GM12878 (cell line): ENCODE measurements at regions of chr1 and their contacts with region 1.

Region 1: DNA sequence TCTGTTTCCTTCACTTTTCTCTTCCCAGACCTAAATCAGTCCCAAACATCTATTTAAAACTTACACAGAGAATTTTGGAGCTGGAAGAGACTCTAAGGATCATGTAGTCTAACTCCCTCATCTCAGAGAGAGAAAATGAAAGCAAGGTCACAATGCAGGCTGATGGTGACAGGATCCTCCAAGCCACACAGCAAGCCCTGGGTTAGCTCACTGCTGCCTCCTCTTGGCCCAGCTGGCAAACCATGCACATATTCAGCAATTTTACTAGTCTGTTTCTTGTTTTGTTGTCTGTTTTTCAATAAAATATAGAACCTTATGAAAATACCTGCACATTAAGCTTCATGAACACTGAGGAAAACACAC is 27.7 kb upstream of the LY9 start:
- DNase-seq: peak; percentile 84
- ATAC-seq: peak; percentile 94
- H3K4me3 ChIP-seq: peak overlapping the region; percentile 59
- H3K27ac ChIP-seq: peak overlapping the region; percentile 89
- H3K4me1 ChIP-seq: peaks cover 23% of the 10 kb centered on the region
- H3K27me3 ChIP-seq: no peaks in the 10 kb centered on the region
- CTCF ChIP-seq: peak; percentile 90 to 97 (median 91)
- EP300 ChIP-seq: no peak
- POLR2A ChIP-seq: no peak; the same call in 1 of the 2 replicates
- RAD21 ChIP-seq: peak; percentile 96

Region 2: DNA sequence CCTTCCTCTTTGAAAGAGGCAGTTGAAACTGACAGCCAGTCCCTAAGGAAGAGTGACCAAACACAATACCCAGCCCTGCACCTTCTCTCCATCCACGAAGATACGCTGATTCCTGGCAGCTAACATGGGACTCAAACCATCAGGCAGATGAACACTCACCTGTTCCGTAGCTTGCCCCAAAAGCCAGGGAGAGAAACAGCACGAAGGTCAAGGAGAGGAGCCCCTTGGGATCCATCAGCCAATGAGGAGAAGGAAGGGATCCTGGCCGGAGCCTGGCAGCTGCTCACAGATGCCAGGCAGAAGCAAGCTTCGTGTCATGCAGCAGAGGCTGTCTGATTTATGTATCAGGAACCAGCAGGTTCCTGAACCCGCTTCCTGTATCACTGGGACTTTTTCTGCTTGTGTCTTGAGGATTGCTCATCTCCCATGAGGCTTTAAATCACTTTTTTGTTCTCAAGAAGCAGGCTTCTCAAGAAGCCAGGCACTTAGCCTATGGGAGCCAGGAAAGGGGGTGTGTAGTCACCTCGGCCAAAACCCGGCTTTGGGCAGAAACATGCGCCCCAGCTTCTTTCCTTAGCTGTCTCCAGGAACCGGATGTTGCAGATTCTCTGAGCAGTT is 121.5 kb before region 1 on chr1 and contains the start of gene SLAMF1:
- CTCF ChIA-PET with region 1: interaction called, 4 read pairs
- POLR2A ChIA-PET with region 1: no interaction called
- RAD21 ChIA-PET with region 1: interaction called, 14 read pairs
- SMC1A ChIA-PET with region 1: interaction called, 3 read pairs
- in situ Hi-C with region 1: no loop called
- intact Hi-C with region 1: no loop called
- DNase-seq: peak; percentile 95
- ATAC-seq: peak; percentile 63
- H3K4me3 ChIP-seq: peak within 1 kb of the TSS; percentile 95
- H3K27ac ChIP-seq: peak within 1 kb of the TSS; percentile 95
- H3K4me1 ChIP-seq: peaks cover 19% of the 10 kb centered on the region
- H3K27me3 ChIP-seq: no peaks in the 10 kb centered on the region
- CTCF ChIP-seq: no peak
- EP300 ChIP-seq: peak; percentile 5 to 19; a peak in 1 of 4 replicates
- POLR2A ChIP-seq: peak; percentile 82
- RAD21 ChIP-seq: no peak
- polyA plus RNA-seq, gene SLAMF1: 128 to 145 TPM

Region 3: GRCh38 chr1:160711602-160712311 is 56.5 kb before region 1 on chr1 and contains the start of gene CD48:
- CTCF ChIA-PET with region 1: interaction called, 15 read pairs
- POLR2A ChIA-PET with region 1: interaction called, 14 read pairs
- RAD21 ChIA-PET with region 1: interaction called, 52 read pairs
- SMC1A ChIA-PET with region 1: interaction called, 69 read pairs
- in situ Hi-C with region 1: no loop called
- intact Hi-C with region 1: no loop called
- DNase-seq: no peak
- ATAC-seq: peak; percentile 56
- H3K4me3 ChIP-seq: peak within 1 kb of the TSS; percentile 93
- H3K27ac ChIP-seq: peak within 1 kb of the TSS; percentile 100
- H3K4me1 ChIP-seq: peaks cover 18% of the 10 kb centered on the region
- H3K27me3 ChIP-seq: no peaks in the 10 kb centered on the region
- CTCF ChIP-seq: no peak
- EP300 ChIP-seq: no peak; a peak in 2 of 4 replicates
- POLR2A ChIP-seq: peak; percentile 81
- RAD21 ChIP-seq: no peak
- polyA plus RNA-seq, gene CD48: 667 to 776 TPM

Region 4: DNA sequence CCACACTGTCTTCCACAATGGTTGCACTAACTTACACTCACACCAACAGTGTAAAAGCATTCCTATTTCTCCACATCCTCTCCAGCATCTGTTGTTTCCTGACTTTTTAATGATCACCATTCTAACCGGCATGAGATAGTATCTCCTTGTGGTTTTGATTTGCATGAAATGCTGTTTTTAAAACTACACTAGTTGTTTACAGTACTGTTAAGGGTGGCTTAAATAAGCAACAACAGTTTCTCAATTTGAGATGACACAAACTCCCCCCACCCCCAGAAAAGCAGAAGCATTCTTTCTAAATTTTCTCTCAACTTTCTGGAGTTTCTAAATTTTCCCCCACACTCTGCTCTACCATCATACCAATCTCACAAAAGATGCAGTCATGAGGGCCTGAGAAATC is 36.3 kb before region 1 on chr1:
- CTCF ChIA-PET with region 1: interaction called, 209 read pairs
- POLR2A ChIA-PET with region 1: interaction called, 54 read pairs
- RAD21 ChIA-PET with region 1: interaction called, 137 read pairs
- SMC1A ChIA-PET with region 1: interaction called, 301 read pairs
- in situ Hi-C with region 1: loop called (anchors 5 kb)
- intact Hi-C with region 1: loop called (anchors 1 kb)
- DNase-seq: no peak
- ATAC-seq: peak; percentile 63
- H3K4me3 ChIP-seq: peak overlapping the region; percentile 4; the same call in 1 of the 2 replicates
- H3K27ac ChIP-seq: peak overlapping the region; percentile 74
- H3K4me1 ChIP-seq: peaks cover 40% of the 10 kb centered on the region
- H3K27me3 ChIP-seq: no peaks in the 10 kb centered on the region
- CTCF ChIP-seq: no peak
- EP300 ChIP-seq: no peak
- POLR2A ChIP-seq: no peak
- RAD21 ChIP-seq: no peak

Region 5: DNA sequence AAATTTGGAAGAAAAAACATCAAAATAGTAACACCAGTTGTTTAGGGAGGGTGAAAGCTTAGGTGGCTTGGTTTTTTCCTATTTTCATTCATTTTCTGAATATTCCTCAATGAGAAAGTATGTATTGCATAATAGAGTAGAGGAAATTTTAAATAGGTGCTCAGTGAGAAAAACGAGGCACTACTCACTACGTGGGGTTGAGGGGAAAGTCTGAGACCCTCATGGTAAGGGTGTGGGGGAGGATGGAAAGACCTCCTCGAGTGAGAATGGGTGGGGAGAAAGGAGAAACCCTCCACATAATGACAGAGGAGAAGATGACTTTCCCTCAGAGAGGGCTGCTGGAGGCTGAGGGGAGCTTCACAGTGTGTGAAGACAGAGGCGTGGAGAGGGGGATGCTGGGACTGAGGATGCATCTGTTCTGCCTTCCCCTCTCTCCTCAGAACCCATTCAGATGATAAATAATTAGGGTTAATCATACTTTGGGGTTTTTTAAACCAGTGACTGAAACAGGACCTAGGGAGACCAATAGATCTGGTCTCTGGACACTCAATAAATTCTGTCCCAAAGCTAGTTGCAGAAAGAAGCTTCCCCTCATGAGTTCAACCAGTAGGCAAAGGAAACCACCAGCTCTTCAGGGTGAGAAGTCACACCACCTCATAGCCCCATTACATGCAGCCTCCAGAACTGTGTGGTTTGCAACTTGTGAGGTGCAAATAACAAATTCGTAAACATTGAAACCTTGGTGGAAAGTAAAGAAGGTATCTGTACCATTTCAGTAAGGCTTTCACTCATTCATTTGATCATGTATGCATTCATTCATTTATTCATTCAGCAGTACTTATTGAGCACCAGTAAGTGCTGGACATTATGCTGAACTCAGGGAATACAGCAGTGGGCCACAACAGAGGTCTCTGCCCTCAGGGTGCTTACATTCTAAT is 12.1 kb before region 1 on chr1:
- CTCF ChIA-PET with region 1: interaction called, 42 read pairs
- POLR2A ChIA-PET with region 1: interaction called, 32 read pairs
- RAD21 ChIA-PET with region 1: interaction called, 33 read pairs
- SMC1A ChIA-PET with region 1: interaction called, 109 read pairs
- in situ Hi-C with region 1: no loop called
- intact Hi-C with region 1: no loop called
- DNase-seq: no peak
- ATAC-seq: peak; percentile 77
- H3K4me3 ChIP-seq: no peak overlapping the region
- H3K27ac ChIP-seq: peak overlapping the region; percentile 49
- H3K4me1 ChIP-seq: peaks cover 20% of the 10 kb centered on the region
- H3K27me3 ChIP-seq: no peaks in the 10 kb centered on the region
- CTCF ChIP-seq: no peak
- EP300 ChIP-seq: peak; percentile 32 to 43; a peak in 1 of 4 replicates
- POLR2A ChIP-seq: peak; percentile 44; the same call in 1 of the 2 replicates
- RAD21 ChIP-seq: no peak

Region 6: GRCh38 chr1:160830321-160831153 is 62.3 kb after region 1 on chr1:
- CTCF ChIA-PET with region 1: interaction called, 39 read pairs
- POLR2A ChIA-PET with region 1: no interaction called
- RAD21 ChIA-PET with region 1: interaction called, 7 read pairs
- SMC1A ChIA-PET with region 1: interaction called, 123 read pairs
- in situ Hi-C with region 1: no loop called
- intact Hi-C with region 1: no loop called
- DNase-seq: no peak
- ATAC-seq: peak; percentile 98
- H3K4me3 ChIP-seq: no peak overlapping the region
- H3K27ac ChIP-seq: no peak overlapping the region
- H3K4me1 ChIP-seq: no peaks in the 10 kb centered on the region
- H3K27me3 ChIP-seq: no peaks in the 10 kb centered on the region
- CTCF ChIP-seq: peak; percentile 67 to 87 (median 76)
- EP300 ChIP-seq: no peak
- POLR2A ChIP-seq: no peak
- RAD21 ChIP-seq: peak; percentile 84